CD8-positive, alpha-beta T cell (primary cell): ENCODE measurements at regions of chr10 and their contacts with region 1.

Region 1: DNA sequence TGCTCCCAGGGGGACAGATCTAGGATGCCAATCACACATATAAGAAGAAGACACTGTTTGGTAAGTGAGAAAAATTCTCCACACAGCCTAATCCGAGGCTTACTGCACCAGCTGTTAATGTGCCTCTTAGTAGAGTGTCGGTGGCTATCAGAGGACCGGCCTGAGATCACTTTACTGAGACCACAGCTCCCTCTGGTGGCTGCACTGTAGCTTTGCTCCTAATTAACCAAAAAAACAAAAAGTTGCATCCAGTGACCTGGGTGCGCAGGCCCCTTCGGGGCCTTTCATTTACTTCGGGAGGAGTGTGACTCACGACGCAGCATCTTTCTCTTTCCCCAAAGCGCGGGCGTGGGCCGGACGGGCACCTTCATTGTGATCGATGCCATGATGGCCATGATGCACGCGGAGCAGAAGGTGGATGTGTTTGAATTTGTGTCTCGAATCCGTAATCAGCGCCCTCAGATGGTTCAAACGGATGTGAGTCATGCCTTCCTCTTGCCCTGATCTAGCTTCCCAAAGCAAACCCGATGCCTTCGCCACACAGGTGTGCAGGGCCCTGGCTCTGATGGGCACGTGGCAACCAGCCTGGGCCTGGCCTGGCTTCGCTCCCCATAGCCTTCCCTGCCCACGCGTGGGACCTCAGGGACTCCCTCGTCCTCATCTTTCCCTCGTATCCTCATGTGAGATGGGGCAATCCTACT is 56.7 kb downstream of the MKI67 start:
- DNase-seq: peak; percentile 64 to 89 (median 82)
- ATAC-seq: peak; percentile 36
- H3K4me3 ChIP-seq: no peak overlapping the region
- H3K4me3 Mint-ChIP-seq: no peak overlapping the region
- H3K27ac ChIP-seq: no peak overlapping the region
- H3K27ac Mint-ChIP-seq: no peak overlapping the region
- H3K4me1 ChIP-seq: peaks cover 26% of the 10 kb centered on the region
- H3K4me1 Mint-ChIP-seq: peaks cover 35% of the 10 kb centered on the region
- H3K27me3 ChIP-seq: no peaks in the 10 kb centered on the region
- H3K27me3 Mint-ChIP-seq: no peaks in the 10 kb centered on the region
- CTCF ChIP-seq: peak; percentile 89

Region 2: DNA sequence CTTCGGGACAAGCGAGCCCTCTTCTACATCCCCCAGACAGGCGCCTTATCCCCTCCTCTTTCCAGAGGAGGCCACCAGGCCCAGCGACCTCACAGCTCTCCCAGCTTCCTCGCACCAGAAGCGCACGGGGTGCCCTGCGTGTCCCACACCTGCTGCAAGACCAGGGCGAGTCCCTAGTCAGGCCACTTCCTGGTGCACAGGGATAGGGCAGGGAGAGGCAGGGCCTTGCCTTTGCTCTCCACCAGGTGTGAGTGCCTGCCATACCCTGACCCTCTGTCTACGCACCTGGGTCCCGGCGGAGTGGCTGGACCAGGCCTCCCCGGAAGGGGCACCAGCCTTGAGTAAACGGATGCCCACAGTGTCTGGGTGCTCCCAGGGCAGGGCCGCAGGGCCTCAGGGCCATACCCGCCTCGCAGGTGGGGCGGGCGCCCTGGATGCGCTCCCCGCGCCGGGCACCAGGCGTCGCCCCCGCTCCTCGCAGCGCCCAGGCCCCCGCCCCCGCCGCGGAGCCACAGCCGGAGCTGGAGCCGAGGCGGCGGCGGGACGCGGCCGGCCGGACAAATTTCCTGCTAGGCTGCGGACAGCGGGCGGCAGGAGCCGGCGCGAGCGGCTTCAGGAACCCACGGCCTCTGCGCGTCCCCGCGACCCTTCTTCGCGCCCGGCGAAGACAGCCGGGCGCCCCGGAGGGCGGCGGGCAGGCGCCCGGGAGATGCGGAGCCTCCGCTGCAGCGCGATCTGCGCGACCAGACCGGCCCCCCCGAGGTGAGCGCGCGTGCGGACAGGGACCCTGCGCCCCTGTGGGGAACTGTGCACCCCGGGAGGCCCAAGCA is 162.7 kb before region 1 on chr10 and contains the start of gene PTPRE:
- CTCF ChIA-PET with region 1: interaction called, 47 read pairs
- POLR2A ChIA-PET with region 1: no interaction called
- intact Hi-C with region 1: loop called in 1 of 2 experiments (anchors 1 kb)
- DNase-seq: peak; percentile 17 to 79 (median 49)
- ATAC-seq: peak; percentile 96
- H3K4me3 ChIP-seq: peak within 1 kb of the TSS in 1 of 2 experiments; percentile 41
- H3K4me3 Mint-ChIP-seq: peak within 1 kb of the TSS; percentile 58
- H3K27ac ChIP-seq: no peak within 1 kb of the TSS
- H3K27ac Mint-ChIP-seq: no peak within 1 kb of the TSS
- H3K4me1 ChIP-seq: no peaks in the 10 kb centered on the region
- H3K4me1 Mint-ChIP-seq: no peaks in the 10 kb centered on the region
- H3K27me3 ChIP-seq: no peaks in the 10 kb centered on the region
- H3K27me3 Mint-ChIP-seq: peaks cover 32% of the 10 kb centered on the region
- CTCF ChIP-seq: peak; percentile 54
- total RNA-seq, gene PTPRE: 72.0 to 80.4 TPM

Region 3: GRCh38 chr10:128016423-128017060 is 53.0 kb before region 1 on chr10:
- CTCF ChIA-PET with region 1: interaction called, 54 read pairs
- POLR2A ChIA-PET with region 1: interaction called, 3 read pairs
- intact Hi-C with region 1: loop called in 1 of 2 experiments (anchors 1 kb)
- DNase-seq: no peak
- ATAC-seq: no peak
- H3K4me3 ChIP-seq: no peak overlapping the region
- H3K4me3 Mint-ChIP-seq: no peak overlapping the region
- H3K27ac ChIP-seq: no peak overlapping the region
- H3K27ac Mint-ChIP-seq: no peak overlapping the region
- H3K4me1 ChIP-seq: peaks cover 2% of the 10 kb centered on the region
- H3K4me1 Mint-ChIP-seq: peaks cover 8% of the 10 kb centered on the region
- H3K27me3 ChIP-seq: no peaks in the 10 kb centered on the region
- H3K27me3 Mint-ChIP-seq: peaks cover 10% of the 10 kb centered on the region
- CTCF ChIP-seq: no peak

Region 4: DNA sequence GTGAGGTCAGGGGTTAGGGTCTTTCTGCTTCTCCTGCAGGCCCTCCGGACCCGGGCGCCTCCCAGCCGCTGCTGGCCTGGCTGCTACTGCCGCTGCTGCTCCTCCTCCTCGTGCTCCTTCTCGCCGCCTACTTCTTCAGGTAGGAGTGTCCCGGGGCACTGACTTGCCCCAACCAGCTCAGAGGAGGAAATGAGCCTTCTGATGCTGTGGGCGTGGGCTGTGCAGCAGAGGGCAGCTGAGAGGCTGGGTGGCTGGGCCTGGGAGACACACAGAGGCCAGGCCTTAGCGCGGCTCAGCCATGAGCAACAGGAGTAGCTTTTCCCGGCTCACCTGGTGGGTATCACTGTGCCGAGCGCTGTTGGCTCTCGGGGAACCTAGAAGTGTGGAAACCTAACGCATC is 22.1 kb before region 1 on chr10:
- CTCF ChIA-PET with region 1: interaction called, 34 read pairs
- POLR2A ChIA-PET with region 1: interaction called, 57 read pairs
- intact Hi-C with region 1: loop called (anchors 1 kb)
- DNase-seq: peak; percentile 65 to 93 (median 85)
- ATAC-seq: peak; percentile 92
- H3K4me3 ChIP-seq: peak overlapping the region; percentile 63 to 72
- H3K4me3 Mint-ChIP-seq: peak overlapping the region; percentile 87
- H3K27ac ChIP-seq: peak overlapping the region; percentile 83 to 93
- H3K27ac Mint-ChIP-seq: peak overlapping the region; percentile 95
- H3K4me1 ChIP-seq: peaks cover 42% of the 10 kb centered on the region
- H3K4me1 Mint-ChIP-seq: peaks cover 58% of the 10 kb centered on the region
- H3K27me3 ChIP-seq: no peaks in the 10 kb centered on the region
- H3K27me3 Mint-ChIP-seq: no peaks in the 10 kb centered on the region
- CTCF ChIP-seq: no peak

Region 5: DNA sequence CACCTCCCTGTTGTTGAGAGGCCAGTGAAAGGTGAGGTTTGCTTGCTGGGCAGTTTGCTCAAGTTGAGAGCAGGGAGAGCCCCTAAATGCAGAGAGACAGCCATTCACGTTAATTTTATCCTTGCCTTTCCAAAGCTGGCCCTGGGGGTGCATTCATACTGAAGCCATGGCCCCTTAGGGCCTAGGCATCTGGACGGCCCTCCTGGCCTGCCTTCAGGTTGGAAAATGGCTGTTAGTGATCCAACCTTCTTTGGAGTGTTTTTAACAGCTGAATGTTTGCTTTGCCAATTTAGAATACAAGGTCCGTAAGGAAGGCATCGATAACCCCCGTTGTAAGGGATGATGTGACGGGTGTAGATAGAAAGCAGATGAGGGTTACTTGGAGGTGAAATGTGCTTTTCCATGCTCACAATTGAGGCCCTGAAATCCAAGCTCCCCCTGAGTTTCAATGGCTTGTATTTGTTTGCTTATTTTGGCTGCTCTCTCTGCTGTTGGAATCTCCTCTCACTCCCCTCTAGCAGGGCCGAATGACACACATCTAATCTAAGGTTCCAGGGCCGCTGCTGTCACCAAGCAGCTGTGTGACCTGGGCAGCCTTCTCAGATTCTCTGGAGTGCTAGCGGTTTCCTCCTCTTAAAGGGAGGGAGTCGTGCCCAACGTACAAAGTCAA is 228.3 kb after region 1 on chr10:
- CTCF ChIA-PET with region 1: no interaction called
- POLR2A ChIA-PET with region 1: no interaction called
- intact Hi-C with region 1: no loop called
- DNase-seq: no peak
- ATAC-seq: no peak
- H3K4me3 ChIP-seq: no peak overlapping the region
- H3K4me3 Mint-ChIP-seq: no peak overlapping the region
- H3K27ac ChIP-seq: no peak overlapping the region
- H3K27ac Mint-ChIP-seq: no peak overlapping the region
- H3K4me1 ChIP-seq: no peaks in the 10 kb centered on the region
- H3K4me1 Mint-ChIP-seq: no peaks in the 10 kb centered on the region
- H3K27me3 ChIP-seq: no peaks in the 10 kb centered on the region
- H3K27me3 Mint-ChIP-seq: no peaks in the 10 kb centered on the region
- CTCF ChIP-seq: no peak

Region 6: DNA sequence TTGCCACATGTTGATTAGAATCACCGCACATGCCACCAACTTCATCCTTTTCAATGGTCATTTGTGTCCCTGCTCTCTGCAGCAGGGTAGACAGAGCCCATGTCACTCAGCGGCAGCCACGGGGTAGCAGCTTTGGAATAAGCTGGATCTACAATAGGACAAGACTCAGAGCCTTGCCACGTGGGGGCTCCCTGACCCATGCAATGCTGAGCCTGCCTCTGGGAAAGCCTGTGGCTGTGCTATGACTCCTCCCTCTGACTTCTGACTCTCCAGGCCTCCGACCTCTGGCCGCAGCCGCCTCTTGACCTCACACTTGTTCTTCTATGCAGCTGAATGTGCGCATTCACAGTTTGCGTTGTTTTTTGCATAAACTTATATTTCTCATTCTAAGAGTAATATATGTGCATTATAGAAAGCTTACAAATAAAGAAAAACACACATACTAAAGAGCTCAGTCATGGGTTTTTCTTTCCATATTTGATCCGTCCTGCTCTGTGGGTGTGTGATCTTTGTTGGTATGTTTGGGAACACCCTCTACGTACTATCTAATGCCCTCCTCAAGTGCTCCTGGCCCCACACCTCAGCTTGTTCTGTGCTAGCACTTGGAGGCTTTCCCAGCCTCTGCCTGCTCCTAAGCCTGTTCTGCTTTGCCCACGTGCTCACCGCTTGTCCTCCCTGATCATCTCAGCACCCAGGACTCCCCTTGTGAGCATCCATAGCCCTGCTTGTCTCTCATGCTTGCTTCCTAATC is 254.8 kb after region 1 on chr10:
- CTCF ChIA-PET with region 1: no interaction called
- POLR2A ChIA-PET with region 1: no interaction called
- intact Hi-C with region 1: no loop called
- DNase-seq: peak in 1 of 9 experiments; percentile 37
- ATAC-seq: no peak
- H3K4me3 ChIP-seq: no peak overlapping the region
- H3K4me3 Mint-ChIP-seq: no peak overlapping the region
- H3K27ac ChIP-seq: no peak overlapping the region
- H3K27ac Mint-ChIP-seq: no peak overlapping the region
- H3K4me1 ChIP-seq: no peaks in the 10 kb centered on the region
- H3K4me1 Mint-ChIP-seq: no peaks in the 10 kb centered on the region
- H3K27me3 ChIP-seq: no peaks in the 10 kb centered on the region
- H3K27me3 Mint-ChIP-seq: peaks cover 22% of the 10 kb centered on the region
- CTCF ChIP-seq: no peak